ENCODE measurements at regions of chr21 and their contacts with region 1.

Region 1: DNA sequence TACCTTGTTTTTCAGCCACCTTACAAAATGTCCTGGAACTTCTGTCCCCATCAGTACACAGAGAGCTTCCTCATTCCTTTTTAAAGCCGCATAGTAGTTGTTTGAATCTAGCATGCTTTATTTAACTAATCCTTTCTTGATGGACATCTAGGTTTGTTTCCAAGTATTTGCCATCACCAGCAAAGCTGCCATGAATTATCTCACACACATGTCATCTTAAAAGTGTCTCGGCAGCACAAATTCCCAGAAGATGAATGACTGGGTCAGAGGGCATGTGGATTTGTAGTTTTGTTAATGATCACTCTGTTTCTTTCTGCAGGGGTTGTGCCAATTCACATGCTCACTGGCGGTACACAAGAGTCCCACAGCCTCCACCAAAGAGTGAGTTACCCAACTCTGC is 68.3 kb downstream of the CLIC6 start:
- DNase-seq: peak; percentile 22
- H3K4me3 Mint-ChIP-seq: no peak overlapping the region
- H3K27ac Mint-ChIP-seq: peak overlapping the region; percentile 24
- H3K4me1 Mint-ChIP-seq: peaks cover 49% of the 10 kb centered on the region
- H3K27me3 Mint-ChIP-seq: no peaks in the 10 kb centered on the region
- CTCF ChIP-seq: no peak

Region 2: DNA sequence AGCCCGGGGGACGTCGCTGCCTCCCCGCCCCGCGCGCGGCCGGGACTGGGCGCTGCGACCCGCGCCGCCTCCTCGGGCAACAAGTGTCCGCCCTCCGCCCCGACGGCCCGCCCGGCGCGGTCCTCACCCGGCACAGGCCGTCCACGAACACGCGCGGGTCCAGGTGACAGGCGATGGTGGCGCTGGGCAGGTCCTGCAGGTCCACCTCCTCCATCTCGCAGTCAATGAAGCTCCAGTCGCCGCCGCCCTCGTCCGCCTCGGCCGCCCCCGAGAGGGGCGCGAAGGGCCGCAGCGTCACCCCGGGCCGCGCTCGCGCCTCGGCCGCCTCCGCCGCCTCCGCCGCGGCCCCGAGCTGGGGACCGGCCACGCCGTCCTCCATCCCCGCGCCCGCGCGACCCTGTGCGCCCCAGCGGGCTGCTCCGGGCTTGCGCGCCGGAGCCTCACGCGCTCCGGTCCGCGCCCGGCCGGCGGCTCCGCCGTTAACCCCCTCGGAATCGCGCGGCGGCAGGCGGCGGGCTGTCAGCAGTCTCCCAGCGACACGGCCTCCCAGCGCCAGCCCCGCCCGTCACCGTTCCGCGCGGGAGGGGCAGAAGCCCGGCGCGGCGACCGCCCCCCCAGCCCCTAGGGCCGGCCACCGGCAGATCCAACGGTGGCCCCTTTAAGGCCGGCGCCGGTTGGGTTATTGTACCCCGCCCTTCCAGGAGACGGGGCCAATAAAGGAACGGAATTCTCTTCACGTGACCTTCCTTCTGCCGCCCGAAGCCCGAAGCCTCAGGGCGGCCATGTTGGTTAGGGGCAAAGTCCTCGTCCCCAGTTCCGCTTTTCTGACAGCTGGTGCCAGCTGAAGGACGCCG is 122.2 kb before region 1 on chr21 and contains the start of gene RCAN1:
- CTCF ChIA-PET with region 1: no interaction called
- POLR2A ChIA-PET with region 1: no interaction called
- intact Hi-C with region 1: no loop called
- DNase-seq: peak; percentile 94
- H3K4me3 Mint-ChIP-seq: peak within 1 kb of the TSS; percentile 81
- H3K27ac Mint-ChIP-seq: peak within 1 kb of the TSS; percentile 63
- H3K4me1 Mint-ChIP-seq: peaks cover 6% of the 10 kb centered on the region
- H3K27me3 Mint-ChIP-seq: no peaks in the 10 kb centered on the region
- CTCF ChIP-seq: no peak
- total RNA-seq, gene RCAN1: 11.9 and 18.4 TPM in 2 replicates

Region 3: GRCh38 chr21:34807146-34807880 is 70.2 kb after region 1 on chr21:
- CTCF ChIA-PET with region 1: no interaction called
- POLR2A ChIA-PET with region 1: interaction called, 28 read pairs
- intact Hi-C with region 1: no loop called
- DNase-seq: peak; percentile 98
- H3K4me3 Mint-ChIP-seq: peak overlapping the region; percentile 47
- H3K27ac Mint-ChIP-seq: peak overlapping the region; percentile 99
- H3K4me1 Mint-ChIP-seq: peaks cover 40% of the 10 kb centered on the region
- H3K27me3 Mint-ChIP-seq: no peaks in the 10 kb centered on the region
- CTCF ChIP-seq: no peak

Region 4: DNA sequence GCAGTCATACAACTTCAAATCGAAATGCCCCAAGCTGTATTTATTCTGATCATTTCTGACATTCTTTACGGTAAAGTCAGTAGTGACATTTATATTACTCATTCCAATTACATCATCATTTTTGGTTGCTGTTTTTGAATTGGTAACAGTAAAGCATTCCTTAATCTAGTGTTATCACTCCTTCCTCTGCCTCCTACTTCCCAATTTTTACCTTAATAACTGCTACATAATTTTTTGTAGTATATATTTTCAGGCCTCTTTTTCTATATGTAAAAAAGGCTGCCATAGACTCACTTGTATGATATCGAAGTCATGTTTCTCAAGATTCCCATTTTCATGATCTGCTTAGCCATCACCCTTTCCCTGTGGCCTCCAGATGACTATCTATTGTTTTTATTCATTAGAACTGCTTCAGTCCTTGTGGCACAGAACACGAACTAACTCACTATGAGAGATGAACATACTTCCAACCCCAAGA is 144.8 kb after region 1 on chr21:
- CTCF ChIA-PET with region 1: interaction called, 6 read pairs
- POLR2A ChIA-PET with region 1: interaction called, 63 read pairs
- intact Hi-C with region 1: no loop called
- DNase-seq: peak; percentile 71
- H3K4me3 Mint-ChIP-seq: peak overlapping the region; percentile 99
- H3K27ac Mint-ChIP-seq: peak overlapping the region; percentile 91
- H3K4me1 Mint-ChIP-seq: peaks cover 48% of the 10 kb centered on the region
- H3K27me3 Mint-ChIP-seq: no peaks in the 10 kb centered on the region
- CTCF ChIP-seq: no peak

Measured in MCF 10A (cell line).